Gastrocnemius medialis (tissue), 4 donors: ENCODE measurements at regions of chr5 and their contacts with region 1.

Region 1: DNA sequence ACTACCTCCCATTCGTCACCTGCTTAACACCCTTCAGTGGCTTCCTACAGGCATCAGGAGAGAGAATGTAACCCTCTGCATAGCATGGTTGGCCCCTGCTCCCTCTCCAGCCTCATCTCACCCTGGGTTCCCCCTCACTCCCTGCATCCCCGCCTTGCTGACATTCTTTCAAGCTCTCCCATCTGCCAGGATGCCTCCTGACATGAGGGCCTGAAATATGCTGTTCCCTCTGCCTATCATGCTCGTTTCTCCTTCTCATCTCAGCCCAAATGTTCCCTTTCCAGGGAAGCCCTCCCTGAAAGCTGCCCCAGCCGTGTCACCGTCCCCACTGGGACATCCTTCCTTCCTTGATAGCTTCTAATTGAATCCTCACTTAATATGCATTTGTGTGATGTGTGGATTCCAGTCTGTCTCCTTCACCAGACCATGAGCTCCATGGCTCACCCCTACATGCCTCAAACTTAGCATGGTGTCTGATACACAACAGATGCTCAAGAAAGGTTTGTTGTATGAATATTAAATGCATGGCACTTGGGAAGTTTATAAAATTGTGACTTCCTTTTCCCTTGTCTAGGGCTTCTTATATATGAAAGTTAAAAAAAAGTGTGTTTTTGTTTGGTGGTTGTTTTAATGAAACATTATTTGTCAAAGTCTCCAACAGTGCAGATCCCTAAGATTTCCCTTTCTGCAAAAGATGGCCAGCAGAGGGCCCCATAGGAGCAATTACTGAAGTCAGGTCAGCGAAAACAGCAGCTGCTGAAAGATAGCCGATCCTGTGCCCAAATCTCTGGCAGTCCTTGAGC is 7.3 kb upstream of the C5orf58 start:
- DNase-seq: peak; percentile 42 to 59
- ATAC-seq: peak in 1 of 2 donors; percentile 61
- H3K4me3 ChIP-seq: no peak overlapping the region
- H3K27ac ChIP-seq: peak overlapping the region in 1 of 4 donors; percentile 22
- H3K4me1 ChIP-seq: no peaks in the 10 kb centered on the region
- H3K27me3 ChIP-seq: no peaks in the 10 kb centered on the region
- CTCF ChIP-seq: peak; percentile 31 to 56 (median 46)
- POLR2A ChIP-seq: no peak

Region 2: DNA sequence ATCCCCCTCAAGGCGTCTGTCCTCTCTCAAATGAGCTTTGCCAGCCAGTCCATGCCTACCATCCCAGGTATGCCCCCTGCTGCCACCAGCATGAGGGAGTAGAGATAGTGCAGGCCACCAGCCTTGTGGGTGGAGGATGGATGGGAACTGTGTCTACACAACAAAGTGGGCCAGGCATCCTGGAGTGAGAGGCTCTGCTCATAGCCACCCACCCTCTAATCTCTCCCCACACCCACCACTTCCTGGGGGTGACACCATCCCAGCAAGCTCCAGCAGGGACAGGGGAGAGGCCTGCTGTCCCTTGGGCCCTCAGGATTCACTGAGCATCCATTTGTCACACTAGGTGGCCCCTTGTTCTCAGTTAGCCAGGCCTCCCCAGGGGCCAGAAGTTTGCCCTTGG is 145.3 kb before region 1 on chr5:
- in situ Hi-C with region 1: no loop called
- intact Hi-C with region 1: no loop called
- DNase-seq: no peak
- ATAC-seq: no peak
- H3K4me3 ChIP-seq: no peak overlapping the region
- H3K27ac ChIP-seq: no peak overlapping the region
- H3K4me1 ChIP-seq: no peaks in the 10 kb centered on the region
- H3K27me3 ChIP-seq: no peaks in the 10 kb centered on the region
- CTCF ChIP-seq: no peak
- POLR2A ChIP-seq: no peak

Region 3: GRCh38 chr5:170200876-170201275 is 24.7 kb before region 1 on chr5:
- in situ Hi-C with region 1: no loop called
- intact Hi-C with region 1: no loop called
- DNase-seq: no peak
- ATAC-seq: no peak
- H3K4me3 ChIP-seq: no peak overlapping the region
- H3K27ac ChIP-seq: no peak overlapping the region
- H3K4me1 ChIP-seq: no peaks in the 10 kb centered on the region
- H3K27me3 ChIP-seq: no peaks in the 10 kb centered on the region
- CTCF ChIP-seq: no peak
- POLR2A ChIP-seq: no peak

Region 4: DNA sequence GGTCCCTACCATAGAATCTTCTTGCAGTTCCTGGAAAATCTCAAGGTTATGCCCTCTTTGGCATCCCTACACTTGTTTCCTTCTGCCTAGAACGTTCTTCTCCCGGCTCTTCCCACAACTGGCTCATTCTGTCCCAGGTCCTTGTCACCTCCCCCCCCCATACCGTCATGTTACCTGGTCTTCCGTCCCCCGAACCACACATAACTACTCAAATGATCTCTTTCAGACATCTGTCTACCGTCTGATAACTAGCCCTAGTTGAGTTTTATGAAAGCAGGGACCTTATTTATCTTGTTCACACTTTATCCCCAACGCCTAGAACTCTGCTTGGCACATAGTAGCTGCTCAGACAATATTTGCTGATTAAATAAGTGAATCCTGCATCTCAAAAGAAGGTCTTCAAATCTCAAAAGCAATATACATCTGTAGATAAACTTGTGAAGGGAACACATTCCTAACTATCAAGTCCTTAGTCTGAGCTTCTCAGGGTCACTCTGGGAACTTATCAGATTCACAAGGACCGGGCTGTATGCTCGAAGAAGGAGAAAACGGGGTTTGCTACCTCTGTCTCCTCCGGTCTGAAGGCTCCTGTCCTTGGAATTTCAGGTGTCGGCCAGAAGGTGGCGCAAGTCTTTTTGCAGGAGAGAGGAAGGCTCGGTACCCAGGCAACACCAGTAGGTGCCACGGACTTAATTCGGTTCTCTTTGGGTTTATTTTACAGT is 42.1 kb after region 1 on chr5:
- in situ Hi-C with region 1: no loop called
- intact Hi-C with region 1: loop called (anchors 5 kb)
- DNase-seq: peak; percentile 33 to 59
- ATAC-seq: peak; percentile 61 to 70
- H3K4me3 ChIP-seq: no peak overlapping the region
- H3K27ac ChIP-seq: peak overlapping the region in 2 of 4 donors; percentile 2 to 13
- H3K4me1 ChIP-seq: peaks cover 5 to 6% of the 10 kb centered on the region in 2 donors
- H3K27me3 ChIP-seq: no peaks in the 10 kb centered on the region
- CTCF ChIP-seq: peak; percentile 55 to 68 (median 64)
- POLR2A ChIP-seq: no peak

Region 5: DNA sequence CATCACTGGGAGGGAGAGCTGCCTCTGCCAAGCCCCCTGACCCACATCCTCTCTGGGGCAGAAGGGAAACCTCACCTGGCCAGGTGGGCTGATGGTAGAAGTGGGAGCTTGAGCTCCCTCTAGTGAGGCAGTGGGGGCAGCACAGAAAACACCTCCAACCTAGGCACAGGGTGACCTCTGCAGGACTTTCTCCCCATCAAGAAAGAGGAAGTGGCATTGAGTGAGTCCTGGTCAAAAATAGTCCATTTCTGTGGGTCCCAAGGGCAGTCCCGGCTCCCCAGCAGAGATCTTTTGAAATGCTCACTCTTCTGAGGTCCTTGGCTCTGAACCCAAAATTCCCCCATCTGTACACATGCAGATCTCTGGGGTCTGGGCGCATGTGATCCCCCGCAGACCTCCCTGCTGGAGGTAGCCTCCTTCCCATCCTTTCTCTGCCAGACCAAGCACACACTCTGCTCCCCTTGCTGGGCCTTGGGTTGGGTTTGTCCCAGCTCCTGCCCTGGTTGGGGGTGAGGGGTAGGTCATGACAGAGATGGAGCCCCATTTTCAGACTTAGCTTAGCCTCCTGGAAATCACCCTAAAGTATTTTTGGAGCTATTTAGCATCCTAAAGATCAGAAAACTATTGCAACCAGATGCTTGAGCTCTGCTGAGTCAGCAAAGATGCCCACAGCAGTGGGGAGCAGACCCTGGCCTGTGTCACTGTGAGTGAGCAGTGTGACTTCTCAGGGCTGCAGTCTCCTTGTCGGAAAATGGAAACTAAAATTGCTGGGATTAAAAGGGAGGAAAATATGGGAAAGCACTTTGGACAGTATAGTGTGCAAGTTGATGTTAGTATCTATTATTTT is 113.6 kb after region 1 on chr5:
- in situ Hi-C with region 1: loop called in 1 of 4 experiments (anchors 10 kb)
- intact Hi-C with region 1: loop called (anchors 5 kb)
- DNase-seq: no peak
- ATAC-seq: no peak
- H3K4me3 ChIP-seq: no peak overlapping the region
- H3K27ac ChIP-seq: no peak overlapping the region
- H3K4me1 ChIP-seq: no peaks in the 10 kb centered on the region
- H3K27me3 ChIP-seq: no peaks in the 10 kb centered on the region
- CTCF ChIP-seq: peak in 2 of 5 experiments; percentile 9 to 12
- POLR2A ChIP-seq: no peak

Region 6: DNA sequence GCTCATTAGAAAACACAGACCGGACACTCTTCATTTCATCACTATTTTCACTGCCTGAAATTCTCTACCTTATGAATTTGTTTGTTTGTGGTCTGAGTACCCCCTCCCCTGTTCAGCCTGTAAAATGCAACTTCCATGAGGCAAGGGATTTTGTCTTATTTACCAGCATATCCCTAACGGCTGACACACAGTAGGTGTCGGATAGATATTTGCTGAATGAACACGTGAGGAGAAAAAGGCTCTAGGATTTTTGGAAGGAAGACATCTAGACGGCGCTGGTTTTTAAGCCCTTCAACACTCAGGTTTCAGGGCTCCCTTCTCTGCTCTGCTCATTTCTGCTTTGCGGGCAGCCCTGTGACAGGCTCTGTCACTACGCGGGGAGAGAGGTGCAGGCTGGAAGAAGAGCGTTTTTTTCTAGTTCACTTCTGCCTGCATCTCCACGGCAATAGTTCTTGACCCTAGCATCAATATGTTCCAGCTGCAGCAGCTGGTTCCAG is 122.7 kb after region 1 on chr5:
- in situ Hi-C with region 1: loop called in 1 of 4 experiments (anchors 10 kb)
- intact Hi-C with region 1: no loop called
- DNase-seq: no peak
- ATAC-seq: no peak
- H3K4me3 ChIP-seq: no peak overlapping the region
- H3K27ac ChIP-seq: no peak overlapping the region
- H3K4me1 ChIP-seq: no peaks in the 10 kb centered on the region
- H3K27me3 ChIP-seq: peaks cover 1 to 16% (median 8%) of the 10 kb centered on the region in 3 donors
- CTCF ChIP-seq: peak in 2 of 5 experiments; percentile 21 to 22
- POLR2A ChIP-seq: no peak

Region 7: DNA sequence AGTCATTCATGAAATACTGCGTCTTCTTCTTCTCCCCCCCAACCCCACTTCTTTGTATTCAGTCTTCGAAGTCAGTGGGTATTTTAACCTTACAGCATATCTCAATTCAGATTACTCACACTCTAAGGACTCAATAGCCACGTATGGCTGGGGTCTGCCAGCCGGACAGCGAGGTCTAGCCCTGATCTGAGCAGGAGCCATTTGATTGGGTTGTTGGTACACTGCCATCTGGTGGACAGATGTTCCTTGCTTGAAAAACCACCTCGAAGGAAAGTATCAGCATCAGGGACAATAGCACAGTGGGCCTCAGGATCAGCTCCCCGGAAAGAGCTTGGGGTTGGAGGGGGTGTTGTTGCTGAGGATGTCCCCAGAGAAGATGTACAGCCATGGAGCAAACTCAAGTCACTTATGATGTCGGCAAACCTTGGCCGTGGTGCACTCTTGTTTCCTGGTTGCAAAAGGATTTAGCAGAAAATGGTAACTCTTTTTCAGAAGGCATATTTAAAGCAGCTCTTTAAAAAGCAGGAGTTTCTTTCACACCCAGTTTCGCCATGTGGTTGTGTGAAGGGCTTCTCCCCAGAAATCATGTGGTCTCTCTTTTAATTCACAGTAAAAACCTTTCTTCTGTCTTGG is 195.4 kb after region 1 on chr5:
- in situ Hi-C with region 1: loop called in 3 of 4 experiments (anchors 5 to 10 kb)
- intact Hi-C with region 1: loop called (anchors 5 kb)
- DNase-seq: peak in 1 of 2 donors; percentile 32
- ATAC-seq: peak; percentile 49 to 50
- H3K4me3 ChIP-seq: no peak overlapping the region
- H3K27ac ChIP-seq: no peak overlapping the region
- H3K4me1 ChIP-seq: no peaks in the 10 kb centered on the region
- H3K27me3 ChIP-seq: no peaks in the 10 kb centered on the region
- CTCF ChIP-seq: peak; percentile 20 to 67 (median 45)
- POLR2A ChIP-seq: no peak

Region 8: DNA sequence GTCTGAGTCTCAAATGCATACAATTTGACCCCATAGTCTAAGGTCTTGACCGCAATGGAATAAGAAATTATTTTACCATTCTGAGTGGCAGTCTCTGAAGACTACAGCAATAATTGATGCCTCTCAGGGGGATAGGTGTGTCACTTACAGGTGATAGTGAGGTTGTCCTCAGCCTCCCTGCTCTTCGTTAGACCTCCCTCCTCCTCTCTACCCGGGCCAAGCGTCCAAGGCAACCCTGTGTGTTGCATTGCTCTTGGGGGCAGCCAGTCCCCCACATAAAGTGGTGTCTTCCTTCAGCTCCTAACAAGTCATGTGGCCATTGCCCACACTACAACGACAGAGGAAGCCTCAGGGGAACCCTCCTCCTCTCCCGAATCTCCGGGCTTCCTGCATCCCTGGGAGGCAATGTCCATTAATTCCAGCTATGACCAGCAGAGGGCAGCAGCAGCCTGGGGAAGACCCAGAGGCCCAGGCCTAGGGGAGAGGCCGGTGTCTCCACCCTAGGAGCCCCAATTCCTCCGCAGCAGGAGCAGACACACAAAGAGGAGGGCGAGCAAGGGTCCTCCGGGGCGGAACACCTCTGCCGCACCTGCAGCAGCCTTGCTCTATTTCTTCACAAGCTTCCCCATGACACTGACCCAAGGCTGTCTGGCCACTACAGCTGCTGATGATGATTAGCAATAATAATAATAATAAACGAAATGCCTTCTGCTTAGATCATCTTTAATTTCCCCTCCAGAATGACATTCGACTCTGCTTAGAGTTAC is 413.1 kb after region 1 on chr5:
- in situ Hi-C with region 1: no loop called
- intact Hi-C with region 1: loop called (anchors 10 kb)
- DNase-seq: no peak
- ATAC-seq: no peak
- H3K4me3 ChIP-seq: no peak overlapping the region
- H3K27ac ChIP-seq: no peak overlapping the region
- H3K4me1 ChIP-seq: peaks cover 4 to 8% of the 10 kb centered on the region in 2 donors
- H3K27me3 ChIP-seq: no peaks in the 10 kb centered on the region
- CTCF ChIP-seq: peak; percentile 33 to 72 (median 59)
- POLR2A ChIP-seq: no peak